Esophagus squamous epithelium (tissue), 5 donors: ENCODE measurements at regions of chr4 and their contacts with region 1.

Region 1: GRCh38 chr4:157045507-157046127 is 30.3 kb upstream of the GLRB start:
- DNase-seq: no peak
- H3K4me3 ChIP-seq: no peak overlapping the region
- H3K27ac ChIP-seq: no peak overlapping the region
- H3K4me1 ChIP-seq: no peaks in the 10 kb centered on the region
- H3K27me3 ChIP-seq: no peaks in the 10 kb centered on the region
- CTCF ChIP-seq: peak in 5 of 6 experiments; percentile 58 to 81 (median 67)
- POLR2A ChIP-seq: no peak

Region 2: DNA sequence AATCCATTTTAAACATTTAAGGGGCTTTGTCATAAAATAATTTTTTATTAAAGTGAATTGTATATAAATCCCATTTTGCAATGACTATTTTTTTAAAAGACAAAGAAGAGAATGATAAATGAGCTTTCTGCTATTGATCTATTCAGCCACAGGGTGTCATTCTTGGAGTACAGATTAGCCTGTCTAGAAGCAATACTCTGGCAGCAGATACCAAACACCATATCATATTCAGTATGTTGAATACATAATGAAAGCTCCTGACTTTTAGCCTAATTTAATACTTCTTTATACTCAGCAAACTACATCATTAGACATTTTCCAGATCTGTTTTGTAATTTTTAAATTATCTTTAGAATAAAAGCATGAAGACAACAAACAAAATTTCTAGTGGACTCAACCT is 570.3 kb before region 1 on chr4:
- intact Hi-C with region 1: loop called (anchors 10 kb)
- DNase-seq: no peak
- H3K4me3 ChIP-seq: no peak overlapping the region
- H3K27ac ChIP-seq: no peak overlapping the region
- H3K4me1 ChIP-seq: no peaks in the 10 kb centered on the region
- H3K27me3 ChIP-seq: no peaks in the 10 kb centered on the region
- CTCF ChIP-seq: peak in 5 of 6 experiments; percentile 24 to 64 (median 39)
- POLR2A ChIP-seq: no peak

Region 3: DNA sequence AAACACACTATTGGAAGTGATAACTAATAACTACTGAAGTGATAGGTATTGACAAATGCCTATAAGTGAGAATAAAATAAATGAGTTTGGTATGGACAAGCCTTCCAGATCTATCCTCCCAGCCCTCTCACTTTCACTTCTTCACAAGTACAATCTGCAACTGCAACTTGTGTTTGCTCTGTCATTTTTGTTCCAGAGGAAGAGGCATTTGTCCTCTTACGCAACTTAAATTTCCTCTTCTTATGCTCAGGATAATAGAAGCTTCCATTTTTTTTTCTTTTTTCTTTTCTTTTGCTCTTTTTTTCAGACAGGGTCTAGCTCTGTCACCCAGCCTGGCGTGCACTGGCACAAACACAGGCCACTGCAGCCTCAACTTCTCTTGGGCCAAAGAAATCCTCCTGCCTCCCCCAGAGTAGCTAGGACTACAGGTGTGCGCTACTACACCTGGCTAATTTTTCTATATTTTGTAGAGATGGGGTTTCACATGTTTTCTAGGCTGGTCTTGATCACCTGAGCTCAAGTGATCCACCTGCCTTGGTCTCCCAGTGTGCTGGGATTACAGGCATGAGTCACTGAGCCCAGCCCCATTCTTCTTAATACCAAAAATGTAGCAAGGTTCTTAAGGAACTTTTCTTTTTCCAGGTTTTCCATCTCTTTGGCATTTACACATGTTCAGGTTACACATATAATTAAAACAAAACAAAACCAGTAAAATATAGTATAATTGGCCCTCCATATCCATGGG is 147.1 kb before region 1 on chr4:
- intact Hi-C with region 1: no loop called
- DNase-seq: no peak
- H3K4me3 ChIP-seq: no peak overlapping the region
- H3K27ac ChIP-seq: peak overlapping the region in 1 of 4 donors; percentile 26
- H3K4me1 ChIP-seq: peaks cover 0 to 5% (median 0%) of the 10 kb centered on the region in 3 donors
- H3K27me3 ChIP-seq: no peaks in the 10 kb centered on the region
- CTCF ChIP-seq: no peak
- POLR2A ChIP-seq: no peak

Region 4: DNA sequence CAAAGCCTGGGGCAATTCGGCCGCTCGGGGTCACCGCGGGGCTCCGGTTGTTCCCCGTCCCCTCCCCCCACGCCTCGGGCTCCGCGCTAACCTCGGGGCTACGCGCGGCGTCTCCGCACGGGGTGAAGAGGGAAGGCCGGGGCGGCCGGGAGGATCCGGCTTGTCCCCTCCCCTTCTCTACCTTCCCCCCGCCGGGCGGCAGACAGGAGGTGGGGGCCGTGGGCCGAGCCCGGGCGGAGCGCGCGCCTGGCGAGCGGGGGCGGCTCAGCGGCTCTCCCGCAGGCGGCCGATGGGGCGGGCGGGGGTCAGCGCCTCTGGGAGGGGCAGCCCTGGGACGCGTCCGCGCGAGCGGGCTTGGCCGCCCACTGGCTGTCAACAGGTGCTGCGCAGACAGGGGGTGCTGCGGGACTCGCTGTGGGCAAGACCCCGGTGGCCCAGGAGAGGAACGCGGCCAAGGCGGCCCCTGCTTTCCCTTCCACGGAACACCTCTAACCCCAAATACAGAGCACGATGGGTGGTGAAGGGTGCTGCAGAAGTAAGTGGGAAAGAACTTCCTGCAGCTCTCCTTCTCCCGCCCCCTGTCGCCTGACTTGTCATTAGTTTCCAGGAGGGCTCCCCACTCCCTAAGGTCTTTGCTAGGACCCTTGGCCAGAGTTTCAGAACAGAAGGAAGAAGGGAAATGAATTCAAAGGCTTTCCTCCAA is 73.8 kb before region 1 on chr4 and contains the start of gene PDGFC:
- intact Hi-C with region 1: loop called (anchors 10 kb)
- DNase-seq: no peak
- H3K4me3 ChIP-seq: peak within 1 kb of the TSS; percentile 66 to 82 (median 72)
- H3K27ac ChIP-seq: peak within 1 kb of the TSS; percentile 80 to 90 (median 89)
- H3K4me1 ChIP-seq: peaks cover 6 to 39% (median 10%) of the 10 kb centered on the region in 3 donors
- H3K27me3 ChIP-seq: peaks cover 0 to 7% (median 0%) of the 10 kb centered on the region in 4 donors
- CTCF ChIP-seq: peak in 5 of 6 experiments; percentile 29 to 50 (median 33)
- POLR2A ChIP-seq: peak in 2 of 4 donors; percentile 48 to 49
- total RNA-seq, gene PDGFC: 2.9 to 22.1 (median 7.7) TPM

Region 5: GRCh38 chr4:157674699-157675098 is 629.1 kb after region 1 on chr4:
- intact Hi-C with region 1: no loop called
- DNase-seq: no peak
- H3K4me3 ChIP-seq: no peak overlapping the region
- H3K27ac ChIP-seq: no peak overlapping the region
- H3K4me1 ChIP-seq: no peaks in the 10 kb centered on the region
- H3K27me3 ChIP-seq: no peaks in the 10 kb centered on the region
- CTCF ChIP-seq: no peak
- POLR2A ChIP-seq: no peak